BJ (cell line): ENCODE measurements at regions of chr3 and their contacts with region 1.

Region 1: DNA sequence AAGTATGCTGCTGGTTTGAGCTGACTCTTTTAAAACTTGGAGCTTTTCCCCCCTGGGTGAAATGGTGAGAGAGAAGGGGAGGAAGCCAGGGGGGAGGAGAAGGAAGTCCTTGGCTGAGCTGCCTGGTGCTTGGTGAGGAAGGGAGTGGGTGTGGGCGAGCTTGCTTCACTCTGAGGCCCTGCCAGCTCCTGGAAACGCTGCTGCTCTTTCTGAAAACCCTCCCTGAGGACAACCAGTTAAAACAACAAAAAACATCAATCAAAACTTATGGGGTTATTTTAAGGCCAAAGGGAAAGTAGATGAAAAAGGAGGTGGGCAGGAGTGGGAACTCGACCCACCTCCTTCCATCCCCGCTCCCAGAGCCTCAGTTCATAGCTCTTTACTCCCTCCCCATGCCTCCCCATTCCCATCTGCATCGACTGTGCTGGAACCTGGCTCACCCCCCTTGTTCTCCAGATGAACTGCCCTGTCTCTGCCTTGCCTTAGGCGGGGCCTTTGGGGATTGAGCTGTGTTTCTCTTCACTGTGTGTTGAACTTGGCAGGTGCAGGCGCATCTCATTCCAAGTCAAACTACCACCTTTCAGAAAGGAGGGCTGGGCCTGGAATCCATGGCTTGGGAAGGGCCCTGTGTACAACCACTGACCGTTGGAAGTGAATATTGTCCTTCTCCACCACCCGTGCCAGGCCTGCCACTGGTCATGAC is 166.1 kb downstream of the ZNF621 start:
- DNase-seq: no peak
- H3K4me3 ChIP-seq: no peak overlapping the region
- H3K27me3 ChIP-seq: no peaks in the 10 kb centered on the region
- CTCF ChIP-seq: no peak

Region 2: DNA sequence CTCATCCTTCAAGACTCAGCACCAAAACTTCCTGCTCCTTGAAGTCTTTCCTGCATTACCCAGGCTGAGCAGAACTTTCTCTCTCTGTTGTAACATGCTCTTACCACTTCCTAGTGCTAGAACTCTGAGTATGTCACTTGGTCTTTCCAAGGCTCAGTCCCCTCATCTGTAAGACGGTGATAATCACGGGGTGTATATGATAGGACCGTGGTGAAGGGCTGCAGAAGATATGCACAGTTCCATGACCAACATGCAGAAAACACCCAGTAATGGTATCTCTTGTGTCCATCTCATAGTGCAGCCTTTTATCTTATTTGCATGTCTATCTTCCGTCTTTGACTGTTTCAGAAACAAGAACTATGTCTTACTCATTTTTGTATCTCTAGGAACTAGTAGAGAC is 11.6 kb before region 1 on chr3:
- CTCF ChIA-PET with region 1: no interaction called
- POLR2A ChIA-PET with region 1: no interaction called
- DNase-seq: no peak
- H3K4me3 ChIP-seq: no peak overlapping the region
- H3K27me3 ChIP-seq: no peaks in the 10 kb centered on the region
- CTCF ChIP-seq: no peak

Region 3: DNA sequence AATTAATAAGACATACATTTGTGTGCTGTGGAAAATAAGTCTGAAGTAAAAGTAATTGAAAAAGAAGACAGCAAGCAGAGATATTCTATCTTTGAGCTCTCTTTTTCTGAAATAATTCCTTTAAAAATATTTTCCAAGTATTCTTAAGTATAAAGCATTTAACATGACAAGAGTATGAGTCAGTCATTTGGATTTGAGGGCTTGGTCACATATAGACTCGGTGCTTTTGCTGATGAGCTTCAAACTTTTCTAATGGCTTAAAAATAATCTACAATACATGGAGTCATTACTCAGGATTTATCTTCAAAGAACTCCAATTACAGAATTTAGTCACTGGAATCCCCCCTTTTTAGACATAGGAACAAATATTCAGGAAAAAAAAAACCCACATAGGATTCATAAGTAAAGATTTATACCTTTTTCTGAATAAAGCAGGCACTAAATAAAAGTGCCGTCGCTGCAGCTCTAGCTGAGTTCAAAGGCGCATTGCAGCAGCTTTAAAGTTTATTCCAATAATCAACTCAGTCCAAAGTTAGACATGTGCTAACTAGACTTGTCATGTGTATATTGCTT is 655.9 kb after region 1 on chr3:
- CTCF ChIA-PET with region 1: no interaction called
- POLR2A ChIA-PET with region 1: interaction called, 17 read pairs
- DNase-seq: no peak
- H3K4me3 ChIP-seq: no peak overlapping the region
- H3K27me3 ChIP-seq: no peaks in the 10 kb centered on the region
- CTCF ChIP-seq: no peak